CD8-positive, alpha-beta memory T cell (primary cell): ENCODE measurements at regions of chr18 and their contacts with region 1.

Region 1: DNA sequence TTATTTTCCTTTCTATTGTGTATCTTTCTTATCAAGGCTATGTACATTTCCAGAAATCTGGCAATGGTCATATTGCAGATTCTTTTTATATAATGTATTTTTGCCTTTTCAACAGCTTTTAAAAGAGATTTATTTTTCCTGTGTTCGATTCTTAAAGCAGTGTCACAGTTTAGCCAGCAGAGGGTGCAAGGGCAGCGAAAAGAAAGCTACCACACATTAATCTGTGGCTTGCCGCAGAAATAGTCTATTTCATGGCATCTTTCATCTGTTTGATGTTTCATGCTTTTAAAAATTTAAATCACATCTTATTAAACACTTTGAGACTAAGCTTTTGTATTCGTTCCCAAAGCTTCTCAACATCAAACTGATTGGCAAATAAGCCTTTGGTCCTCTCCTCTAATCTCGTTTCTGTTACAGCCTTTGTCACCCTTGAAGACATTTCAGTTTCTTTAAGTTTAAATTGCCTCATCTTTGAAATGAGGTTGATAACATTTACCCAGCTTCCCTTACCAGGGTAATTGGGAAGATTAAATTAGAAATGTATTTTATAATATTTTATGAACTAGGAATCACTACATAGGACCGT is 73.3 kb downstream of the PIK3C3 start:
- DNase-seq: peak in 3 of 5 donors; percentile 8 to 53 (median 10)
- H3K4me3 ChIP-seq: no peak overlapping the region
- H3K4me3 Mint-ChIP-seq: no peak overlapping the region
- H3K27ac ChIP-seq: no peak overlapping the region
- H3K27ac Mint-ChIP-seq: no peak overlapping the region
- H3K4me1 ChIP-seq: no peaks in the 10 kb centered on the region
- H3K4me1 Mint-ChIP-seq: peaks cover 30 to 38% (median 31%) of the 10 kb centered on the region in 3 donors
- H3K27me3 ChIP-seq: no peaks in the 10 kb centered on the region
- H3K27me3 Mint-ChIP-seq: no peaks in the 10 kb centered on the region

Region 2: DNA sequence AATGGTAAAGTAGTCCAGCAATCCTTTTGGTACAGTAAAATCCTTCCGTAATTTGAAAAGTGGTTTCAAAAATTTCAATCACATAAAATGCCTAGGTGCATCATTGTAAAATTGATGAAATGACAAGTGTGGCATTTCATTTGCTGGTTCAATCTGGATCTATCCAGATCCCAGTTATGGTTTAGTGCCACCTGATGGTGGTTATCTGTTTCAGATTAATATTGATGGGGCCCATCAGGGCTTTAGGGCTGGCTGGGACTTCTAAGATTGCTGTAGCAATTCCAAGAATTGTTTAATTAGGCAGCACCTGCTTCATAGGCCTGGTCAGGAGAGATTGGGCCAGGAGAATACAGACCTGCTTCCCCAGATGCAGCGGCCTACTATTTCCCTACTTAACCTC is 128.8 kb before region 1 on chr18:
- CTCF ChIA-PET with region 1: no interaction called
- POLR2A ChIA-PET with region 1: no interaction called
- DNase-seq: no peak
- H3K4me3 ChIP-seq: no peak overlapping the region
- H3K4me3 Mint-ChIP-seq: no peak overlapping the region
- H3K27ac ChIP-seq: no peak overlapping the region
- H3K27ac Mint-ChIP-seq: no peak overlapping the region
- H3K4me1 ChIP-seq: no peaks in the 10 kb centered on the region
- H3K4me1 Mint-ChIP-seq: no peaks in the 10 kb centered on the region
- H3K27me3 ChIP-seq: no peaks in the 10 kb centered on the region
- H3K27me3 Mint-ChIP-seq: peaks cover 0 to 4% of the 10 kb centered on the region in 2 donors

Region 3: DNA sequence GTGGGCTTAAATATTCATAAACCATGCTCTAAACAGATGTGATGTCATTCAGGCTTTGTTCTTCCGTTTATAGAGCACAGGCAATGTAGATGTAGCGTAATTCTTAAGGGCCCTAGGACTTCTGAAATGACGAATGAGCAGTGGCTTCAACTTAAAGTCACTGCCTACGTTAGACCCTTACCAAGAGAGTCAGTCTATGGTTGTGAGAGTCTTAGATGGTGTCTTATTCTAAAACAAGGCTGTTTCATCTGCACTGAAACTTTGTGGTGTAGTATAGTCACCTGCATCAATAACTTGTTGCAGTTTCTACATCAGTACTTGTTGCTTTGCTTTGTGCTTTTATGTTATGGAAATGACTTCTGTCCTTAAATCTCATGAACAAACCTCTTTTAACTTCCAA is 17.3 kb before region 1 on chr18:
- CTCF ChIA-PET with region 1: interaction called, 21 read pairs
- POLR2A ChIA-PET with region 1: no interaction called
- DNase-seq: no peak
- H3K4me3 ChIP-seq: no peak overlapping the region
- H3K4me3 Mint-ChIP-seq: no peak overlapping the region
- H3K27ac ChIP-seq: no peak overlapping the region
- H3K27ac Mint-ChIP-seq: no peak overlapping the region
- H3K4me1 ChIP-seq: no peaks in the 10 kb centered on the region
- H3K4me1 Mint-ChIP-seq: peaks cover 0 to 18% (median 8%) of the 10 kb centered on the region in 3 donors
- H3K27me3 ChIP-seq: no peaks in the 10 kb centered on the region
- H3K27me3 Mint-ChIP-seq: no peaks in the 10 kb centered on the region

Region 4: DNA sequence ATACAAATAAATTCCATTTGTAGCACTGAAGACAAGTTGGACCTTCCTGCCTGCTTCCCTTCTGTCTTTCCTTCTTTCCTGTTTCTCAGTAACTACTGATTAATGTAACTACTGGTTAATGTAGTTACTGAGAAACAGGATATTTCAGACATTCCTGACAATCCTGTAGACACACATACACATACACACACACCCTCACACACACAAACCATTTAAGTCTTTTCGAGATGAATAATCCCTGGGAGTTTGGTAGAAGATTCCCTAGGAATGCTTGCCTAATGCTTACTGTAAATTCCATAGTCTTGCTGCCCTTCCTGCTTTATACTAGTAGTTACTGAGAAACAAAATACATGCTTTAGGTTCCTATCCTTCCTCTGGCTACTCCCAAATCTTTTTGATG is 10.6 kb after region 1 on chr18:
- CTCF ChIA-PET with region 1: interaction called, 10 read pairs
- POLR2A ChIA-PET with region 1: no interaction called
- DNase-seq: no peak
- H3K4me3 ChIP-seq: no peak overlapping the region
- H3K4me3 Mint-ChIP-seq: no peak overlapping the region
- H3K27ac ChIP-seq: no peak overlapping the region
- H3K27ac Mint-ChIP-seq: peak overlapping the region in 2 of 8 donors; percentile 25 to 43
- H3K4me1 ChIP-seq: no peaks in the 10 kb centered on the region
- H3K4me1 Mint-ChIP-seq: peaks cover 3 to 10% (median 4%) of the 10 kb centered on the region in 3 donors
- H3K27me3 ChIP-seq: no peaks in the 10 kb centered on the region
- H3K27me3 Mint-ChIP-seq: peaks cover 0 to 2% of the 10 kb centered on the region in 2 donors

Region 5: GRCh38 chr18:42053188-42053781 is 24.9 kb after region 1 on chr18:
- CTCF ChIA-PET with region 1: interaction called, 10 read pairs
- POLR2A ChIA-PET with region 1: no interaction called
- DNase-seq: peak; percentile 28 to 55 (median 41)
- H3K4me3 ChIP-seq: no peak overlapping the region
- H3K4me3 Mint-ChIP-seq: no peak overlapping the region
- H3K27ac ChIP-seq: no peak overlapping the region
- H3K27ac Mint-ChIP-seq: peak overlapping the region in 6 of 8 donors; percentile 4 to 68 (median 30)
- H3K4me1 ChIP-seq: no peaks in the 10 kb centered on the region
- H3K4me1 Mint-ChIP-seq: peaks cover 12 to 15% (median 15%) of the 10 kb centered on the region in 3 donors
- H3K27me3 ChIP-seq: no peaks in the 10 kb centered on the region
- H3K27me3 Mint-ChIP-seq: no peaks in the 10 kb centered on the region

Region 6: DNA sequence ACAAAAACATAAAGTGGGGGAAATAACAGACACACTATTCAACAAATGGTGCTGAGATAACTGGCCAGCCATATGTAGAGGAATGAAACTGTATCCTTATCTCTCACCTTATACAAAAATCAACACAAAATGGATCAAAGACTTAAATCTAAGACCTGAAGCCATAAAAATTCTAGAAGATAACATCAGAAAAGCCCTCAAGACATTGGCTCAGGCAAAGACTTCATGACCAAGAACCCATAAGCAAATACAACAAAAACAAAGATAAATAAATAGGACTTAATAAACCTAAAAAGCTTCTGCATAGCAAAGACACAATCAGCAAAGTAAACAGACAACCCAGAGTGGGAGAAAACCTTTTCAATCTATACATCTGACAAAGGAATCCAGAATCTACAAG is 205.6 kb after region 1 on chr18:
- CTCF ChIA-PET with region 1: no interaction called
- POLR2A ChIA-PET with region 1: no interaction called
- DNase-seq: no peak
- H3K4me3 ChIP-seq: no peak overlapping the region
- H3K4me3 Mint-ChIP-seq: no peak overlapping the region
- H3K27ac ChIP-seq: no peak overlapping the region
- H3K27ac Mint-ChIP-seq: no peak overlapping the region
- H3K4me1 ChIP-seq: no peaks in the 10 kb centered on the region
- H3K4me1 Mint-ChIP-seq: no peaks in the 10 kb centered on the region
- H3K27me3 ChIP-seq: no peaks in the 10 kb centered on the region
- H3K27me3 Mint-ChIP-seq: no peaks in the 10 kb centered on the region